PC-9 (cell line): ENCODE measurements at regions of chr20 and their contacts with region 1.

Region 1: GRCh38 chr20:46681032-46681854 is 8.0 kb downstream of the TP53RK start:
- DNase-seq: peak; percentile 53 to 62
- H3K4me3 ChIP-seq: no peak overlapping the region
- H3K27ac ChIP-seq: no peak overlapping the region
- H3K4me1 ChIP-seq: no peaks in the 10 kb centered on the region
- H3K27me3 ChIP-seq: no peaks in the 10 kb centered on the region
- CTCF ChIP-seq: peak; percentile 91

Region 2: GRCh38 chr20:46562373-46563169 is 118.7 kb before region 1 on chr20:
- CTCF ChIA-PET with region 1: interaction called, 4 read pairs
- POLR2A ChIA-PET with region 1: no interaction called
- intact Hi-C with region 1: loop called (anchors 2 kb)
- DNase-seq: peak; percentile 40 to 59
- H3K4me3 ChIP-seq: no peak overlapping the region
- H3K27ac ChIP-seq: no peak overlapping the region
- H3K4me1 ChIP-seq: no peaks in the 10 kb centered on the region
- H3K27me3 ChIP-seq: no peaks in the 10 kb centered on the region
- CTCF ChIP-seq: peak; percentile 96